Activated CD4-positive, alpha-beta T cell treated with anti-CD3 and anti-CD28 coated beads for 36 hours (primary cell): ENCODE measurements at regions of chr1 and their contacts with region 1.

Region 1: DNA sequence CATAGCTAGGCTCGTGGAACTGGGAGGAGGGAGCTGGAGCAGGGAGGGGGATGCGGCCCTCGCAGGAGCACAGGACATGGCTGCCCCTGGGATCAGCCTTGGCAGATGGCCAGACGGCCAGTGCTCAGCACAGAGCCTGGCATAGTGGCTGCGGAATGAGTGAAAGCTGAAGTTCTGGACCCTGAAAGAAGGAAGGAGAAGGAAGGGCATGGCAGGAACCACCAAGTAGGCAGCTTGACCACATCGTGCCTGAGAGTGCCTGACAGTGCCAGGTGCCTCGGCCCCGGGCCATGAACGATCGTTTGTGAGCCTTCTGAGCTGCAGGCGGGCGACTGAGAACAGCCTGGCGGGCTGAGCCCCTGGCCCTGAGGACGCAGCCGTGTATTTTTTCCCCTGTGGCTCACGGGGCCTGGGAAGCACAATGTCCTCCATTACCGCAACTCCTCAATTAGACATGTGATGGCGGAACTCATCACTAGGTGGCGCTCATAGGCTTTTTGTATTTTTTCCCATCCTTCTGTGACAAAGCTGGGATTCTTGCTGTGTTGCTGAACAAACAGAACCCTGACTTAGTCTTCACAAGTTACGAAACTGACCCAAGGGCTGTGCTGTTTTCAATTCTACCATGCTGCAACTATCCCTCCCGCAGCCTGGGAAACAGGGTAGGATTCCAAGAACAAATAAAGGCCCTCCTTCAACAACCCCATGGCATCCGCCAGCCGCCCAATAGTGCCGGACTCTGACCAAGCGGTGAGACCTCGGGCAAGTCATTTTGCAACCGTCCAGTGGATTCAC is 29.9 kb upstream of the TMEM61 start:
- DNase-seq: peak; percentile 75
- ATAC-seq: peak; percentile 68
- H3K4me3 Mint-ChIP-seq: no peak overlapping the region
- H3K27ac Mint-ChIP-seq: no peak overlapping the region
- H3K4me1 Mint-ChIP-seq: peaks cover 9% of the 10 kb centered on the region
- H3K27me3 Mint-ChIP-seq: no peaks in the 10 kb centered on the region

Region 2: GRCh38 chr1:54996359-54996868 is 45.8 kb after region 1 on chr1:
- CTCF ChIA-PET with region 1: interaction called, 151 read pairs
- POLR2A ChIA-PET with region 1: no interaction called
- intact Hi-C with region 1: loop called (anchors 1 kb)
- DNase-seq: peak; percentile 92
- ATAC-seq: peak; percentile 96
- H3K4me3 Mint-ChIP-seq: peak overlapping the region; percentile 24
- H3K27ac Mint-ChIP-seq: no peak overlapping the region
- H3K4me1 Mint-ChIP-seq: peaks cover 14% of the 10 kb centered on the region
- H3K27me3 Mint-ChIP-seq: peaks cover 37% of the 10 kb centered on the region

Region 3: DNA sequence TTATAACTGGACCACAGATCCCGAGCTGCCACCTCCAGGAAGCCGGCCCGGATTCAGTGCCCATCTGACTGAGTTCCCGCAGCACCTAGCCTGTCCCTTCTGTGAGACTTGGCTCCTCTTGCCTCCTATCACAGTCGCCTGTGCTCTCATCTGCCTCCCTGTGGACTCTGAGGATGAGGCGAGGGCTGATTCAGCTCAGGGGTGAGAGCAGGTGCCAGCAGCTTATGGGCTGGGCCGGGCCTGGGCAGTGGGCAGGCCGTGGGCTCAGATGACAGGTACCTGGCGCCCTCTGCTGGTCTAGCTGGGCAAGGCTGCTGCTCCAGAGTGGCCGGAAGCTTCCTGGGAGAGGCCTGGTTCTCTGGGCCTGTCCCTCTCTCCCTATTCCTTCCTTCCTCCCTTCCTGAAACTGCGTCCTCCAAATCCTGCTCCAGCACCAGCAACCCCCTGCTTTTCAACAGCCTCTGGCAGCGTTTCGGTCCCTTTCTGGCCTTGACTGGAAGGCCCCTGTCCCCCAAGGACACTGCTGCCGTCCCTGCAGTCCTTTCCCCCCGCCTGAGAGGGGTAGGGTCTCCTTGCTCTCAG is 71.5 kb after region 1 on chr1:
- CTCF ChIA-PET with region 1: interaction called, 38 read pairs
- POLR2A ChIA-PET with region 1: no interaction called
- intact Hi-C with region 1: loop called (anchors 1 kb)
- DNase-seq: peak; percentile 88
- ATAC-seq: peak; percentile 99
- H3K4me3 Mint-ChIP-seq: no peak overlapping the region
- H3K27ac Mint-ChIP-seq: no peak overlapping the region
- H3K4me1 Mint-ChIP-seq: no peaks in the 10 kb centered on the region
- H3K27me3 Mint-ChIP-seq: peaks cover 3% of the 10 kb centered on the region

Region 4: GRCh38 chr1:55337801-55338447 is 387.4 kb after region 1 on chr1:
- CTCF ChIA-PET with region 1: no interaction called
- POLR2A ChIA-PET with region 1: no interaction called
- intact Hi-C with region 1: no loop called
- DNase-seq: peak; percentile 31
- ATAC-seq: peak; percentile 75
- H3K4me3 Mint-ChIP-seq: no peak overlapping the region
- H3K27ac Mint-ChIP-seq: no peak overlapping the region
- H3K4me1 Mint-ChIP-seq: no peaks in the 10 kb centered on the region
- H3K27me3 Mint-ChIP-seq: no peaks in the 10 kb centered on the region